Lower leg skin (tissue), 4 donors: ENCODE measurements at regions of chr22 and their contacts with region 1.

Region 1: DNA sequence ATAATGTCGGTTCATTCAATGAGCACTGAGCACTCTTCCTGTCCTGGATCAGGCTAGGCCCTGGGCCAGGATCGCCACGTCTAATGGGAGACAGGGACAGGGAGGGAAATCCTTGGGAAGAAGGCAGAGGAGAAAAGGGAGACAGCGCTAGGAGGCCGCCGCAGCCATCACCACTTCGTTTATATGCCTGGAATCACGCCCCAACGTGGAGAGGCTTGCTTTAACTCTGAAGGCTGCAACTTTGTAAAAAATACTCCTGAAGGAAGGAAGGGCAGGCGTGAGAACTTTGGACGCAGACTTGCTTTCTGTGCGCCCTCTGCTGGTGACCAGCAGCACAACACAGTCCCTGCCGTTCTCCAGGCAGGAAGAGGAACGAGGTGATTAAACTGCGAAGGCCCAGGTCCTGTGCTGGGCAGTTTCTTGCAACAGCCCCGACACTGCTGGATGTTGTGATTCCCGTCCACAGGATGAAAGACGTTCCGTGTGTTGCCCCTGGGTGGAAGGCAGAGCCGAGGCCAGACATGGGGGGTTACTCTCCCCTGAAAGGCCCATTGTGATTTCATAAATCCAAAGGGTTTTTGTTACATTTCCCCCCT is 22.1 kb downstream of the RIBC2 start:
- DNase-seq: peak; percentile 91 to 98
- H3K4me3 ChIP-seq: no peak overlapping the region
- CTCF ChIP-seq: peak in 1 of 3 donors; percentile 92
- POLR2A ChIP-seq: no peak

Region 2: GRCh38 chr22:45163451-45164269 is 272.0 kb before region 1 on chr22 and contains the start of gene NUP50:
- intact Hi-C with region 1: loop called (anchors 10 kb)
- DNase-seq: peak; percentile 94 to 99
- H3K4me3 ChIP-seq: peak within 1 kb of the TSS; percentile 86
- CTCF ChIP-seq: peak in 1 of 3 donors; percentile 17
- POLR2A ChIP-seq: no peak
- total RNA-seq, gene NUP50: 50.6 to 129 (median 71.2) TPM

Region 3: DNA sequence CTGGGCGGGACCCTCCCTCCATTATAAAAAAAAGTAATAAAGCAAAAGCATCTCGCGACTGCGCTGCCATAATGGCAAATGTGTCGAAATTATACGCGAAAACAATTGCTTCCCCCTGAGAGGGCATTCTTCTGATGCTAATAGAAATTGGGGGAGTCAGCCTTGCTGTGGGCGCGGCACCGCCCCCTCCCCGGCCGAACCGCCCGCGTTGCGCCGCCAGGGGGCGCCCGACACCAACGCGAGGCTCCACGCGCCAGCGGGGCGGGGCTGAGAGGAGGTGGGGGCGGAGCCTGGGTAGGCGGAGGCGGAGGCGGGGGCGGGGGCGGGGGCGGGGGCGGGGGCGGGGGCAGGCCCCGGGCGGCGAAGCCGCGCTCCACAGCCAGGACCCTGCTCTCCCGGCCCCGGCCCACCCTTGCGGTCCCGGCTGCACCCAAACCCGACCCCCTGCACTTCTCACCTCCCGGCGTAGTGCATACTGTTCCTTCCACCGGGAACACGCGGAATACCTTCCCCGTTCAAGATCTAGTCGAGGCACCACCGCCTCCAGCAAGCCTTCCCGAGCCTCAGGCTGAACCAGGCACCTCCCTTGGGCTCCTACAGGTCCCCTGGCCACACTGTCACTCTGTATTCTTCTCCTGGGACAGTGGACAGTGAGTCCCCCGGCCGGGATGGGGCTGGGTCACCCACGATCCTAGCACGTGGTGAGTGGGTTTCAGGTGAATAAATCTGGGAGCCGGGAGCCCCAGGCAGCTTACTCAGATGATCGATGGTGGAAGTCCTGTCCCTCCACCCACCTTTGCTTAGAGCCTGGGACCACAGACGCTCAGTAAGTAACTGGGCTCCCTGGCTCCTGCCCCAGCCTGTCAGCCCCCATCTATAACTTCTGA is 166.4 kb before region 1 on chr22:
- intact Hi-C with region 1: loop called (anchors 2 kb)
- DNase-seq: peak; percentile 62 to 97
- H3K4me3 ChIP-seq: peak overlapping the region; percentile 39
- CTCF ChIP-seq: no peak
- POLR2A ChIP-seq: no peak

Region 4: DNA sequence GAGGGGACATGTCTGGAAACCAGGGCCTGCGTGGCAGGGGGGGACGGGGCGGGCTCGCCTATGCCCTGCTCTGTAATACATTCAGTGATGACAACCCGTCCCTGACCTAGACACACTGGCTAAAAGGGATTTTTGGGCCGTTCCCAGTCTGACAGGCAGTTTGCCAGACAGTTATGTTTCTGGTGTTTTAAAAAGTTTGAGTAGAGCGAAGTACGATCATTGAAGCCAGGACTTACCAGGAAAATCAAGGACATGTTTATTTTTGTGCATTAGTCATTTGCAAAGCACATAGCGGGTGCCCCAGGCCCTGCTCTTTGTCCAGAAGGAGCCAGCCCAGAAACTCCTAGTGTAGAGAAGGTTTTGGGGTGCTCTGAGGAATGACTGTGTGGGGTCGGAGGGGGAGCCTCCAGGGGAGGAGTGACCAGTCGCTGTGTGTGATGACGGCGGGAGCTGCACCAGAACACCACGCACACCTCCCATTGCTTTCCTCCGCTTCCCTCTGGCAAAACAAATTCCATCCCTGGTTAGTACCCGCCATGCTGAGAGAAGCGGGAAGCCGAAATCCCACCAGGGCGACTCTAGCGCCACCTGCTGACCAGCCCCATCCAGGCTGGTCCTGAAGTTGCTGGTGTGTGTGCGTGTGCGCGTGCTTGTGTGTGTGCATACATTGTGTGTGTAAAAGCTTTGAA is 117.9 kb after region 1 on chr22:
- intact Hi-C with region 1: loop called (anchors 5 kb)
- DNase-seq: peak; percentile 72 to 95
- H3K4me3 ChIP-seq: no peak overlapping the region
- CTCF ChIP-seq: peak in 1 of 3 donors; percentile 60
- POLR2A ChIP-seq: no peak

Region 5: DNA sequence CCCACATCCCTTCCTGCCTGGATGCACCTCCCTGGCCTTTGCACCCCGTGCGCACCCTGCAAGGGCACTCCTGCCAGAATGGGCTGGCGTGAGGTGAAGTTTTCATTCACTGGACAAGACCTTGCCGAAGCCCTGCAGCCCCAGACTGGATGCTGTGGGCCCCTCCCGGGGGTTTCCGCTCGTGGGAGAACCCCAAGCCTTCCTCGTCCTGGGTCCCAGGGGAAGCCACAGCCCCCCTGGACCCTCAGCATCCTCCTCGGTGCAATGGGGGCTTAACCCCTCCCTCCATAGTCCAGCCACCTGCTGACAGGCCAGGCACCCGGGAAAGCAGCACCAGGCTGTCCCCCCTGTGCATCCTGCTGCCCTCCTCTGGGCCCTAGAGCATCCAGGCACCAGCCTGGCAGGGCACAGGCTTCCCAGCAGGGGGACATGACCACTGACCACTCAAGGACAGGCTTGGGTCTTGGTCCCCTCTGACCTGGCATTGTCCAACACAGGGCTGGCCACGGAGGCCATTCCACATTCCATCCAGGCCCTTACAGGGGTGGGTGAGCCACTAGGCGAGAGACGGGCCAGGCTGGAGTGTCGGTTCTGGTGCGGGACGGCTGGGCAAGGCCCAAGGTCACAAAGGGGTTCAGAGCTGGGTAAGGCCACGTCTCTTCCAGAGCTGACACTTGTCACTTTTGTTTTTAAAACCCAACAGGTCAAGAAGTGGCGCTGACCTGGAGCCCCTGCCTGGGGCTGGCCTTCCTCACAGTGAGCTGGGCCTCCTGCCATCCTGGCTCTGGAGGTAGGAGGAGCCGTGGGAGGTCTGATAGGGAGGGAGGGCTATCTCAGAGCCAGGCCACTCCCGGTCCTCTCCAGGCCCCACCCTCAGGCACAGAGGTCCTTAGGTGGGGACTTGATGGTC is 673.2 kb after region 1 on chr22:
- intact Hi-C with region 1: no loop called
- DNase-seq: no peak
- H3K4me3 ChIP-seq: no peak overlapping the region
- CTCF ChIP-seq: no peak
- POLR2A ChIP-seq: no peak